Heart left ventricle (tissue), 16 donors: ENCODE measurements at regions of chr15 and their contacts with region 1.

Region 1: GRCh38 chr15:96345560-96346399 is 15.3 kb downstream of the NR2F2 start:
- DNase-seq: peak in 4 of 5 donors; percentile 74 to 85 (median 82)
- ATAC-seq: peak; percentile 62 to 85 (median 76)
- H3K4me3 ChIP-seq: peak overlapping the region; percentile 22 to 91 (median 67)
- H3K27ac ChIP-seq: peak overlapping the region; percentile 2 to 96 (median 92)
- H3K4me1 ChIP-seq: peaks cover 0 to 76% (median 22%) of the 10 kb centered on the region in 12 donors
- H3K27me3 ChIP-seq: peaks cover 0 to 95% (median 20%) of the 10 kb centered on the region in 9 donors
- CTCF ChIP-seq: peak; percentile 44 to 77 (median 68)
- POLR2A ChIP-seq: peak in 1 of 2 donors; percentile 45

Region 2: DNA sequence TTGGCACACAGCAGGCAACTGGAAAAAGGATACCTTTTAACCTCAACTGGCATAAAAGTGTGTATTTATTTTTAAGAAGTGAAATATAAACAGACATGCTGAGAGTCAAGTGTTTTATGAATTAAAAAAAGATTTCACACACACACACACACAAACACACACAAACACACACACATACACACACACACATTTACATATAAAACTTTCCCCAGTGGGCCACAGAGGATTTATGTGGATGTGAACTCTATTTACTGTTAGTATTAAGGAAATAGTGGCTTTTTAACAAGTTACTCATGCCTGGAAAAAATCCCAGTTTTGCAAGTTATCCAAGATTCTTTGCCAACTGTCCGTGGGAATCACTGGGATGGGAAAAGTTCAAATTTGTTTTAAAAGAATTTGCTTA is 741.1 kb before region 1 on chr15:
- intact Hi-C with region 1: loop called in 2 of 10 experiments (anchors 10 kb)
- DNase-seq: peak in 2 of 5 donors; percentile 27 to 59
- ATAC-seq: peak in 2 of 4 donors; percentile 62 to 69
- H3K4me3 ChIP-seq: no peak overlapping the region
- H3K27ac ChIP-seq: peak overlapping the region in 8 of 12 donors; percentile 30 to 74 (median 54)
- H3K4me1 ChIP-seq: peaks cover 0 to 25% (median 7%) of the 10 kb centered on the region in 12 donors
- H3K27me3 ChIP-seq: no peaks in the 10 kb centered on the region
- CTCF ChIP-seq: no peak
- POLR2A ChIP-seq: no peak